ENCODE measurements at regions of chr10 and their contacts with region 1.

Region 1: DNA sequence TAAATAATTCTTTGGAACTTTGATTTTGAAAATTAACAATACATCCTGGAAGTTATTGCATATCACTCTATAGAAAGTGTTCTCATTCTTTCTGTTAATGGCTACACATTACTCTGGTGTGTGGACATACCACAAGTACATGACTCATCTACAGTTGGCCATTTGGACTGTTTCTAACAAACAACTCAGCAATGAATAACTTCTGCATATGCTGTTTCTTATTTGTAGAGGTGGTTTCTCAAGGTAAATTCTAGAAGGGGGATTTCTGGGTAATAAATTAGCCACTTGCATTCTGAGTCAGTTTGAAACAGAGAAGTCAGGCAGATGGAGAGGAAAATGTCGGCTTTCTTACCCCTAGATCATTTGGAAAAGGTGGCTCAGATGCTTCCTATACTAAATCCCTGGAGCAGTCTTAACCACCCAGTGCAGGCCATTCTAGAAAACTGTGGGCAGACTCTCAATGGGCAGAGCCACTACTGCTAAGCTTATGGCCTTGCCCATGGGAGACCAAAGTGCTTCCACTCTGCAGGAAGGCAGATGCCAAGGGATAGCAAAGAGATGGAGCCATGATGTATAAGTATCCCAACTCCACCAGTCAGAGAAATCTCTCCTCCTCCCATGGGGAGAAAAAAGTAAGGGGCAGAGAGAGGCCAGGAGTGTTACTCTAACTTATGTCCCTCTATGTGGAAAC is 194.0 kb upstream of the PLPP4 start:
- DNase-seq: peak; percentile 58
- H3K4me3 ChIP-seq: no peak overlapping the region
- H3K27ac ChIP-seq: no peak overlapping the region
- H3K4me1 ChIP-seq: no peaks in the 10 kb centered on the region
- H3K27me3 ChIP-seq: peaks cover 4% of the 10 kb centered on the region
- CTCF ChIP-seq: no peak

Region 2: DNA sequence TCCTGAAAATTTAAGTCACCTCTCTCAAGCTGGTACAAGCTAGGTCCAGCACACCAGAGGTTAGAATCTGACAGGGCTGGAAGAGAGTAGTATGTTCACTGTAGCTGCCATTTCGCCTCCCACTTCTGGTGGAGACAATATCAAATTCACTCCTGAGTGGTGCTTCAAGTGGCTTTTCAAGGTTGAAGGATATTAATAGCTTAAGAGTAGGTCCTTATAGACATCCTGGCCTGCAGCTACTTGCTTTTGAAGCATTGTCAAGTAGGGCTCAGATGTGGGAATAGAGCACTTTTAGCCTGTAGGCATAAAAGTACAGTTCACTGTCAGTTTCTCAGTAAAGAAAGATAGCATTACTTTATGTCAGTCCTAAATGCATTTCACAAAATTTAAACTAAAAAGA is 76.5 kb before region 1 on chr10:
- CTCF ChIA-PET with region 1: no interaction called
- dilution Hi-C with region 1: loop called (anchors 5 kb)
- in situ Hi-C with region 1: no loop called
- intact Hi-C with region 1: no loop called
- DNase-seq: no peak
- H3K4me3 ChIP-seq: no peak overlapping the region
- H3K27ac ChIP-seq: no peak overlapping the region
- H3K4me1 ChIP-seq: peaks cover 3% of the 10 kb centered on the region
- H3K27me3 ChIP-seq: no peaks in the 10 kb centered on the region
- CTCF ChIP-seq: no peak

Region 3: GRCh38 chr10:120426306-120426705 is 163.3 kb after region 1 on chr10:
- CTCF ChIA-PET with region 1: no interaction called
- dilution Hi-C with region 1: no loop called
- in situ Hi-C with region 1: no loop called
- intact Hi-C with region 1: no loop called
- DNase-seq: no peak
- H3K4me3 ChIP-seq: no peak overlapping the region
- H3K27ac ChIP-seq: no peak overlapping the region
- H3K4me1 ChIP-seq: peaks cover 12% of the 10 kb centered on the region
- H3K27me3 ChIP-seq: peaks cover 6% of the 10 kb centered on the region
- CTCF ChIP-seq: no peak

Measured in mammary epithelial cell (primary cell).